Psoas muscle (tissue), 8 donors: ENCODE measurements at regions of chr4 and their contacts with region 1.

Region 1: DNA sequence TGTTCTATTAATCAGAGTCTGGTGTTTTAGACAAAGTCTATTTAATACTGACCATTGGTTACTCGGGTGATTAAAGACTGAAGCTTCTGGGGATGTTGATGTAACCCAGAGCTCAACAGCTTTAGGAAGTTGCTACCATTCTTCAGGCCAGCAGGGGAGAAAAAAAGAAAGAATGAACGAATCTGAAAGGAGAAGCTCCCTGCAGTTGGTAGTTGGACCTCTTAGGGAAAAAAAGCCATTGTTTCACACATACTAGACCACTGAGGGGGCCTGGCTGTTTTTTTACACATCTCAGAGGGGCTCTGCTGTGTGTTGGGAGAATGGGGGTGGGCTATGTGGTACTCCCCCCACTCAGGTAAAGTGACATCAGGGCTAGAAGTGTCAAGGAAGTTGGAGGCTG is 378.9 kb downstream of the KCNIP4 start:
- DNase-seq: no peak
- ATAC-seq: no peak
- H3K4me3 ChIP-seq: no peak overlapping the region
- H3K27ac ChIP-seq: no peak overlapping the region
- H3K4me1 ChIP-seq: no peaks in the 10 kb centered on the region
- H3K27me3 ChIP-seq: no peaks in the 10 kb centered on the region
- CTCF ChIP-seq: no peak

Region 2: DNA sequence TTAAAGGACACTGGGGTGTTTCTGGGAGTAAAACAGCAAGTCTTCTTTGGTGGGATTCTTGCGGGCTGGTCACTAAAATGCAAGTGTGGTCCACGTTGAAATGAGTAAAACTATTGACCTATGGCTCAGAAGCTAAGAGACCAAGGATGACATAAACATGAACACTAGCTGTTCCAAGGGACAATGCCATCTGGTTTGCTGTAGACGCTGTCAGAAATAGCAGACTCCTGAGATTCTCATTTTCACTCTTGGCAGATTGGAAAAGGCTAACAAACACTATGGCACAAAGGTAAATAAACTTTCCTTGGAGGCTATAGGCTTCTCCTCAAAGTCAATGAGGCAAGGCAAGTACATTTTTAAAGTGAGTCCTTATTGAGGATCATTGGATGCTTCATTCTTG is 35.4 kb after region 1 on chr4:
- intact Hi-C with region 1: loop called in 1 of 2 experiments (anchors 1 kb)
- DNase-seq: no peak
- ATAC-seq: no peak
- H3K4me3 ChIP-seq: no peak overlapping the region
- H3K27ac ChIP-seq: no peak overlapping the region
- H3K4me1 ChIP-seq: no peaks in the 10 kb centered on the region
- H3K27me3 ChIP-seq: no peaks in the 10 kb centered on the region
- CTCF ChIP-seq: no peak

Region 3: DNA sequence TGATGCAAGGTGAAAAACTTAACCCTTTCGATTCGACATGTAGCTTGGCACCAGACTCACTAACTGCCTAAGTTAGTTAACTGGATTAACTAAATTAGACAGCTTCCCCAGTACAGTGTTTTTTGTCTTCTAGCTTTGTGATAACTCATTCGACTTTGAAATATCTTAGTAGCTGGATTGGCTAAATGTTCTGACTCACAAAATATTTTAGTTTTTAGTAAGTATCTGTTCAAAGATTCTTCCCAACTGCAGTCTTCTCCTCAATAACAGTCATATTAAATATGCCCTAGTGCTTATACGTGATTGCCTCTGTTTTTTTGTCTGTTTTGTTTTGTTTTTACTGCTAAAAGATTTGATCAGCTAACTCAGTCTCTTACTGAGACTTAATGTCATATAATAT is 276.0 kb after region 1 on chr4:
- intact Hi-C with region 1: no loop called
- DNase-seq: no peak
- ATAC-seq: no peak
- H3K4me3 ChIP-seq: no peak overlapping the region
- H3K27ac ChIP-seq: no peak overlapping the region
- H3K4me1 ChIP-seq: no peaks in the 10 kb centered on the region
- H3K27me3 ChIP-seq: no peaks in the 10 kb centered on the region
- CTCF ChIP-seq: no peak